Pancreas (tissue), 10 donors: ENCODE measurements at regions of chr16 and their contacts with region 1.

Region 1: GRCh38 chr16:19517418-19518089 is 4.3 kb downstream of the GDE1 start:
- DNase-seq: no peak
- ATAC-seq: no peak
- H3K4me3 ChIP-seq: no peak overlapping the region
- H3K27ac ChIP-seq: no peak overlapping the region
- H3K4me1 ChIP-seq: peaks cover 11 to 39% (median 13%) of the 10 kb centered on the region in 3 donors
- H3K27me3 ChIP-seq: no peaks in the 10 kb centered on the region
- CTCF ChIP-seq: no peak

Region 2: DNA sequence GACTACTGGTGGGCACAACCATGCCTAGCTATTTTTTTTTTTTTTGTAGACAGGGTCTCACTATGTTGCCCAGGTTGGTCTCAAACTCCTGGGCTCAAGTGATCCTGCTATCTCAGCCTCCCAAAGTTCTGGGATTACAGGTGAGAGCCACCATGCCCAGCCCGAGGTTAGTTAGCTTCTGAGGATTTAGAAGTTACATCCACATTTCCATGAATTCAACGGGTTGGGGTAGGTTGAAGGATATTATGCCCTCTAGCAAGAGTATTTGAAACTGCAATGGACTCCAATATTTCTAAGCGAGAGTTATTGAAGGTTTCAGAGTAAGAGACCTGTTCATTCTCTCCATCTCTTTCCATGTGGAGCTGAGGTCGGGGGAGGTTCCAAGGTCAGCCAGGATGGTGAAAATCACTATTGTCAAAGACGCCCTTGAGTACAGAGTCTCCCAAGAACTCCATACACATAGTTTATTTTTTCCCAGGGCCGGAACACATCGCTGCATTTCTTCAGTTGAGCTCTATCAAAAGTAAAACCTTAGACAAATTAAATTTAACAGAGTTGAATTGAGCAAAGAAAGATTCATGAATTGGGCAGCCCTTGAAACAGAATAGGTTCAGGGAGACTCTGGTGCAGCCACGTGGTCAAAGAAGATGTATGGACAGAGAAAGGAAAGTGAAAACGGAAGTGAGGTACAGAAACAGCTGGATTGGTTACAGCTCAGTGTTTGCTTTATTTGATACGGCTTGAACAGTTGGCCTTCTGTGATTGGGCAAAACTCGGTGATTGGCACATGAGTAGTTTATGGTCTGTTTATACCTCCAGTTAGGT is 422.8 kb before region 1 on chr16:
- intact Hi-C with region 1: loop called in 1 of 3 experiments (anchors 10 kb)
- DNase-seq: peak in 2 of 6 donors; percentile 38 to 42
- ATAC-seq: peak; percentile 84 to 89 (median 88)
- H3K4me3 ChIP-seq: no peak overlapping the region
- H3K27ac ChIP-seq: no peak overlapping the region
- H3K4me1 ChIP-seq: peaks cover 0 to 4% (median 0%) of the 10 kb centered on the region in 3 donors
- H3K27me3 ChIP-seq: no peaks in the 10 kb centered on the region
- CTCF ChIP-seq: no peak

Region 3: DNA sequence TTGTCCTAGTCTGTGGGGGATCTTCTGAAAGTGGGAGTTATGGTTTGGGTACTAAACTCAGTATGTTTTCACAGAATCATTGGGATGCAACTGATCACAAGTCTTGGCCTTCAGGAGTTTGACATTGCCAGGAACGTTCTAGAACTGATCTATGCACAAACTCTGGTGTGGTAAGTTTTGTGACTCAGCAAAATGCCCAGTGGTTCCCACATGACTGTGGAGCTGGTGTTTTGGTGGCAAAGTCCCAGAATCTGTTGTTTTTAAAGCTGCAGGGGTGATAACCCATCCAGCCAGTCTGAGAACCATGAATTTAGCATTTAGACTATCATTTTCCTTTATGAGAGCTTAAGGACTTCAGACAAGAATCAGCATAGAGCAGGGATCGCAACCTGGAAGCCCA is 36.3 kb before region 1 on chr16:
- intact Hi-C with region 1: no loop called
- DNase-seq: no peak
- ATAC-seq: no peak
- H3K4me3 ChIP-seq: no peak overlapping the region
- H3K27ac ChIP-seq: no peak overlapping the region
- H3K4me1 ChIP-seq: no peaks in the 10 kb centered on the region
- H3K27me3 ChIP-seq: no peaks in the 10 kb centered on the region
- CTCF ChIP-seq: no peak